MCF 10A (cell line): ENCODE measurements at regions of chr2 and their contacts with region 1.

Region 1: GRCh38 chr2:28137221-28137620 is 246.7 kb downstream of the BABAM2 start:
- DNase-seq: peak; percentile 70
- H3K4me3 Mint-ChIP-seq: peak overlapping the region; percentile 16
- H3K27ac Mint-ChIP-seq: peak overlapping the region; percentile 57
- H3K4me1 Mint-ChIP-seq: peaks cover 46% of the 10 kb centered on the region
- H3K27me3 Mint-ChIP-seq: no peaks in the 10 kb centered on the region
- CTCF ChIP-seq: no peak

Region 2: DNA sequence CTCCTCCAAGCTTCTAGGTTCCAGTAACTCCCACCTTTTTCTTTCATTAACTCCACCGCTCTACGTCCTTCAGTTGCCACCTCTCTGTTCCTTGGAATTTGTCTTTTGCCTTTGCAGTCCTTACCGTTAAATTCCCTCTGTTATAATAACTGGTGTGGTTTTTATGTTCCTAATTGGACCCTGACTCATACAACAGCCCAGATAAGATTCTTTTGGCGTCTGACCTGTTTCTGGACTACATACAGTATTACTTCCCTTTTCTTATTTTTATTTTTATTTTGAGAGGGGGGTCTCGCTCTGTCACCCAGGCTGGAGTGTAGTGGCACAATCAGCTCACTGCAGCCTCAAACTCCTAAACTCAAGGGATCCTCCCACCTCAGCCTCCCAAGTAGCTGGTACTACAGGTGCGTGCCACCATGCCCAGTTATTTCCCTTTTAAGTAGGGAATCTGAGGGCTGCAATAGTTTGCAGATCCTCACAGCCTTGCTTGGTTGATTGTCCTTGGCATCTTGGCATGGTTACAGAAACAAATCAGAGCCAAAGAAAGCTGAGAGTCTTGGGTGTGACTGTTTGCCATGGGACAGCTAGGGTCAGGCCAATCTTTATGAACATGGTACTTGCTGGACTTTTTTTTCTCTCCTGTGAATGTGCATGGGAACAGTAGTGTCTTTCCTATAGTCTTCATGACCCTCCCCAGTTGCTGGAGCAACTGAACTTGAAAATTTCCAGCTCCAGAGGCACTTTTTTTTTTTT is 966.5 kb before region 1 on chr2:
- CTCF ChIA-PET with region 1: no interaction called
- POLR2A ChIA-PET with region 1: no interaction called
- intact Hi-C with region 1: no loop called
- DNase-seq: peak; percentile 26
- H3K4me3 Mint-ChIP-seq: no peak overlapping the region
- H3K27ac Mint-ChIP-seq: no peak overlapping the region
- H3K4me1 Mint-ChIP-seq: peaks cover 7% of the 10 kb centered on the region
- H3K27me3 Mint-ChIP-seq: no peaks in the 10 kb centered on the region
- CTCF ChIP-seq: no peak

Region 3: DNA sequence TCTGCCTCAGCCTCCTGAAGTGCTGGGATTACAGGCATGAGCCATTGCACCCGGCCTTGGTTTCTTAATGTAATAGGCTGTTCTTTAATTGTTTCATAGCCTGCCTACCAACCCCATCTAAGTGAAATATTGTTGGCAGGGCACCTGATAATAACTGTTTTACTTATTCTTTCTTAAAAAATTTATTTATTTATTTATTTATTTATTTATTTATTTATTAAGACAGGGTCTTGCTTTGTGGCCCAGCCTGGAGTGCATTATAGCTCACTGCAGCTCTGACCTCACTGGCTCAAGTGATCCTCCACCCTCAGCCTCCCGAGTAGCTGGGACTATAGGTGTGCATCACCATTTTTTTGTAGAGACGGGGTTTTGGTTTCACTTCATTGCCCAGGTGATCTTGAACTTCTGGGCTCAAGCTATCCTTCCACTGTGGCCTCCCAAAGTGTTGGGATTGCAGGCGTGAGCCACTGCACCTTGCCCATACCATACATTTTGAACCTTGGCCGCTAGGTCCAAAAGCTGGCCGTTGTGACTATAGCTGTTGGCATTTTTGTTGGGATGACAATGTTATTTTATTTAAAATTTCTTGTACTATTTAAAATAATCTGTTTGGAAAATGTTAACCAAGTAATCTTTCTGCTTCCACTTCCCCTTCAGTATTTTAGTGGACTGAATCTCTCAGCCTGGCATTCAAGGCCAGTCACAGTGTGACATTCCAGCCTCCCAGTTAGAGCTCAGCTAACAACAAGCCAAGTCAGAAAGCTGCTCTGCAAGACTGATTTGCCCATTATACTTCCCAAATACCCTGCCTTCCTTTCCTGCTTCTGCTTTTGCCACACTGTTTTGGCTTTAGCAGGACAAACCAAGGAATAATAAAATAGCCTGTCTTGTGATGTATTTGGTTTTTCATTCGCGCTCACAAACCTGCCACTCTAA is 194.3 kb before region 1 on chr2:
- CTCF ChIA-PET with region 1: no interaction called
- POLR2A ChIA-PET with region 1: no interaction called
- intact Hi-C with region 1: no loop called
- DNase-seq: no peak
- H3K4me3 Mint-ChIP-seq: no peak overlapping the region
- H3K27ac Mint-ChIP-seq: no peak overlapping the region
- H3K4me1 Mint-ChIP-seq: peaks cover 5% of the 10 kb centered on the region
- H3K27me3 Mint-ChIP-seq: no peaks in the 10 kb centered on the region
- CTCF ChIP-seq: no peak

Region 4: GRCh38 chr2:28068088-28068487 is 69.1 kb before region 1 on chr2:
- CTCF ChIA-PET with region 1: no interaction called
- POLR2A ChIA-PET with region 1: interaction called, 16 read pairs
- intact Hi-C with region 1: no loop called
- DNase-seq: peak; percentile 43
- H3K4me3 Mint-ChIP-seq: no peak overlapping the region
- H3K27ac Mint-ChIP-seq: peak overlapping the region; percentile 39
- H3K4me1 Mint-ChIP-seq: peaks cover 19% of the 10 kb centered on the region
- H3K27me3 Mint-ChIP-seq: no peaks in the 10 kb centered on the region
- CTCF ChIP-seq: no peak

Region 5: DNA sequence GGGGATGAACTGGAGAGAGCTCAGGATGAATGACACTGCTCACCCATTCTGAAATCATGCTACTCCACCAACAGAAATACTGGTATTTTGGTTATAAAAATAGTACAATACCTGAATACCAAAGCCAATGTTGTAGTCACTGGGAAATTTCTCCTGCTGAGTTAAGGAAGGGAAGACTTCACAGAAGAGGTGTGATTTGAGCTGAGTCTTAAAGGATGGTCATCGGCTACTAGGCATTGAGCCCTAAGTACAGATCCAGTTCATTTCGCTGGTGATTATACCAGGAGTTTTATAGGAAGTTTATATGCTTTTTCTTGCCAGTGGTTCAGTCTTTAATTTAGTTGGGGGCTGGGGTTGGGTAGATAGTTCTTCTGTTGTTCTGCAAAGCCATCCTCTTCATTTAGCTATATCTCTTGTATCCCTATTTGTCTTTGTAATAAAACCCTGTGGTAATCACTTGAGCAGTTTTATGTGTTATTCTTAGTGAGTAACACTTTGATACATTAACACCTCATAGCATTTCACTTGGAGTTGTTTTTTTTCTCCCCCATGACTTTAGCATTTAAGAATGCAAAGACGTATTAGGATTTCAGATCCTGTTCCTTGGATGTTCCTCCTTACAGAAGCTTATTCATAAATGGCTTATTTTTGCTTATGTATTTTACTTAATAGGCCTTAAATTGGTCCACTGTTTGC is 15.5 kb after region 1 on chr2:
- CTCF ChIA-PET with region 1: interaction called, 5 read pairs
- POLR2A ChIA-PET with region 1: interaction called, 25 read pairs
- intact Hi-C with region 1: no loop called
- DNase-seq: no peak
- H3K4me3 Mint-ChIP-seq: no peak overlapping the region
- H3K27ac Mint-ChIP-seq: peak overlapping the region; percentile 60
- H3K4me1 Mint-ChIP-seq: peaks cover 14% of the 10 kb centered on the region
- H3K27me3 Mint-ChIP-seq: no peaks in the 10 kb centered on the region
- CTCF ChIP-seq: no peak

Region 6: DNA sequence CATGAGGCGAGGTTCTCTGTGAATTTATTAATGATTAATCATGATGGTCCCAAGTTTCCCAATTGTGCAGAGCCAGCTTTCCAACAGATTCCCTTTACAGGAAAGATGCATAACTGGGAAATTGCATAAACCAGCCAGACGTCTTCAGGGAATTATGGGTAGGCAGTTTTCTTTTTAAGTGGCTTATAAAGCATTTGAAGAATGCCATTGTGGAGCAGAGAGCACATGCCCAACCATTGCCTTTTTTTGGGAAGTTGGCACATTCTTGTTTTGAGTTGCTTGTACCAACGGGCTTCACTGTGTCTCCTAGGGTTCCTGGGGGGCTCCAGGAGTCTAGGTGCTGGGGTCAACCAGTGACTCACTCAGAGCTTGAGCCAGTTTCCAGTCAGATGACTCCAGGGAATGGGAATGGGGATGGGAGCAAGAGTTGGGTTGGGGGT is 23.8 kb after region 1 on chr2:
- CTCF ChIA-PET with region 1: interaction called, 4 read pairs
- POLR2A ChIA-PET with region 1: interaction called, 15 read pairs
- intact Hi-C with region 1: no loop called
- DNase-seq: peak; percentile 82
- H3K4me3 Mint-ChIP-seq: no peak overlapping the region
- H3K27ac Mint-ChIP-seq: peak overlapping the region; percentile 89
- H3K4me1 Mint-ChIP-seq: peaks cover 45% of the 10 kb centered on the region
- H3K27me3 Mint-ChIP-seq: no peaks in the 10 kb centered on the region
- CTCF ChIP-seq: no peak

Region 7: GRCh38 chr2:28175028-28175427 is 37.8 kb after region 1 on chr2:
- CTCF ChIA-PET with region 1: no interaction called
- POLR2A ChIA-PET with region 1: interaction called, 21 read pairs
- intact Hi-C with region 1: no loop called
- DNase-seq: no peak
- H3K4me3 Mint-ChIP-seq: no peak overlapping the region
- H3K27ac Mint-ChIP-seq: no peak overlapping the region
- H3K4me1 Mint-ChIP-seq: peaks cover 17% of the 10 kb centered on the region
- H3K27me3 Mint-ChIP-seq: no peaks in the 10 kb centered on the region
- CTCF ChIP-seq: no peak